ENCODE measurements at regions of chr17 and their contacts with region 1.

Region 1: DNA sequence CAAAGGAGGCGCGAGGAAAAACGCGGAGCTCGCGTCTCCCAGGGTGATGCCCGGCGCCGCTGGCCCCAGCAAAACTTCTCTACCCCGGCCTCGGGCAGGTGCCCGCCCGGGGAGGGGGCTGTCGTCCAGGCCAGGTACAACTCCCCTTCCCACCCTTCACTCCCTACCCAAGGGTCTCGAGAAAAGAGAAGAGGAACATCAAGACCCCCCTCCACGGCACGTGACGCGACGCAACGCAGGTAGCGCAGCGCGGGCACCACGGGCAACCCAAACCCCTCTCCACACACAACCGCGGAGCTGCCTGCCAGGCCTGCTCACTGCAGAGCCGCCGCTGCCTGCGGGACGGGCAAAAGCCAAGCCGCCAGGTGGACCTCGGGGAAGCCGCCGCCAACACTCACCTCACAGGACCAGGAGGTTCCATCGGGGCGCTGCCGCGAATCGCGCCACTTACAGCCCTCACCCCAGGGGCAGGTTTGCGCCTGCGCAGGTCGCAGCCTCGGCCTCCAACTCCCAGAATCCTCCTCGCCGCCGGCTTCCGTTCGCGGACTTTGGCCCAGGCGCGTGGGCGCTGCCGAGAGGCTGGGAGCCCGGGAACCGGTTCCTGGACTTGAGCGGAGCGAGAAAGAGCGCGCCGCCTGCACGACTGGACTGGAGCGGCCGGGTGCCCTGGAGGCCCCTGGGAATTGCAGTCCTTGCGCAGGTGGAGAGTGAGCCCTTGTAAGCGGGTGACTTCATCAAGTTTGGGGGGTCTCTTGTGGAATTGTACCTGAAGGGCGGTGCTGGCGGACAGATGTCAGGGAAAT is at the start of gene ZNF232:
- DNase-seq: peak; percentile 94
- ATAC-seq: peak; percentile 91
- H3K4me3 ChIP-seq: peak within 1 kb of the TSS; percentile 80 to 93 (median 88)
- H3K4me3 Mint-ChIP-seq: peak within 1 kb of the TSS; percentile 86
- H3K27ac ChIP-seq: peak within 1 kb of the TSS; percentile 62 to 74
- H3K27ac Mint-ChIP-seq: peak within 1 kb of the TSS; percentile 70
- H3K4me1 ChIP-seq: peaks cover 15 to 20% of the 10 kb centered on the region in 2 donors
- H3K4me1 Mint-ChIP-seq: peaks cover 25% of the 10 kb centered on the region
- H3K27me3 ChIP-seq: peaks cover 0 to 16% (median 8%) of the 10 kb centered on the region in 4 experiments
- H3K27me3 Mint-ChIP-seq: peaks cover 10% of the 10 kb centered on the region
- CTCF ChIP-seq: no peak
- total RNA-seq, gene ZNF232: 17.4 and 19.3 TPM in 2 replicates

Region 2: GRCh38 chr17:4986951-4987766 is 124.4 kb before region 1 on chr17 and contains the start of gene CAMTA2:
- CTCF ChIA-PET with region 1: no interaction called
- POLR2A ChIA-PET with region 1: no interaction called
- intact Hi-C with region 1: loop called (anchors 5 kb)
- DNase-seq: peak; percentile 91
- ATAC-seq: peak; percentile 89
- H3K4me3 ChIP-seq: peak within 1 kb of the TSS; percentile 67 to 96 (median 81)
- H3K4me3 Mint-ChIP-seq: peak within 1 kb of the TSS; percentile 91
- H3K27ac ChIP-seq: peak within 1 kb of the TSS; percentile 84 to 90
- H3K27ac Mint-ChIP-seq: peak within 1 kb of the TSS; percentile 90
- H3K4me1 ChIP-seq: peaks cover 21 to 28% of the 10 kb centered on the region in 2 donors
- H3K4me1 Mint-ChIP-seq: peaks cover 35% of the 10 kb centered on the region
- H3K27me3 ChIP-seq: no peaks in the 10 kb centered on the region
- H3K27me3 Mint-ChIP-seq: no peaks in the 10 kb centered on the region
- CTCF ChIP-seq: peak; percentile 88
- total RNA-seq, gene CAMTA2: 57.6 and 57.9 TPM in 2 replicates

Region 3: DNA sequence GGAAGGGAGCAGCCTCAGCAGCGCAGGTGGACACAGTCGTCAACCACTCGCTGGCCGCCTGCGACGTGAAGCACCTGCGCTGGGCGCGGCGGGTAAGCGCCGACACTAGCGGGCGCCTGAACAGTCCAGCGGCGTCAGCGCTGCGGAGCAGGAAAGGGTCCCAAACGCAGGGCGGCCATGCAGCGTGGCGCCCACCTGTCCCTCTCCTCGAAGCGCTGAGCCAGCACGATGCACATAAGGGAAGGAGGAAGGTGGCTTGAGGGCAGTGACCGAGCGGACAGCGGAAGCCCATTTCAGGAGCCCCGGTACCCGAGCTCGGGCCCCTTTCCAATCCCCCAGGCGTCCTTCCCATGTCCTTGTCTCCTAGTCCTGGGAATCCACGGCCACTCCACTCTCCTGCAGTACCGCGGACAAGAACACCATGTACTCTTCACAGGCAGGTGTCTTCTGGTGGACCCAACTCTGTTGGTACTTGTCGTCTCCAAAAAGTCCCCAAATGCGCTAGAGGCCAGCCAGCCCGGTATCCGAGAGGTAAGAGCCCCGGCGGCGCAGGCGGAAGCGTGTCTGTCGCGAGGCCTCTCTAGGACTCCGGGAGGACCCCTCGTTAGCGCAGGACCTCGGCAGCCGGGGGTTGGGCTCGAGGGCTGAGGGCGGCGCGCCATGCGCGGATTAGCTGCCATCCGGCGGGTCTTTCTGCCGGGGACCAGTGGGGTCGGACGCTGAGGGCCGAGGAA is 14.3 kb before region 1 on chr17:
- CTCF ChIA-PET with region 1: interaction called, 3 read pairs
- POLR2A ChIA-PET with region 1: no interaction called
- intact Hi-C with region 1: loop called (anchors 1 kb)
- DNase-seq: peak; percentile 81
- ATAC-seq: peak; percentile 93
- H3K4me3 ChIP-seq: peak overlapping the region; percentile 17 to 79 (median 71)
- H3K4me3 Mint-ChIP-seq: peak overlapping the region; percentile 97
- H3K27ac ChIP-seq: peak overlapping the region; percentile 33 to 76
- H3K27ac Mint-ChIP-seq: peak overlapping the region; percentile 90
- H3K4me1 ChIP-seq: peaks cover 4 to 14% of the 10 kb centered on the region in 2 donors
- H3K4me1 Mint-ChIP-seq: peaks cover 12% of the 10 kb centered on the region
- H3K27me3 ChIP-seq: peaks cover 0 to 3% (median 0%) of the 10 kb centered on the region in 4 experiments
- H3K27me3 Mint-ChIP-seq: no peaks in the 10 kb centered on the region
- CTCF ChIP-seq: no peak

Region 4: DNA sequence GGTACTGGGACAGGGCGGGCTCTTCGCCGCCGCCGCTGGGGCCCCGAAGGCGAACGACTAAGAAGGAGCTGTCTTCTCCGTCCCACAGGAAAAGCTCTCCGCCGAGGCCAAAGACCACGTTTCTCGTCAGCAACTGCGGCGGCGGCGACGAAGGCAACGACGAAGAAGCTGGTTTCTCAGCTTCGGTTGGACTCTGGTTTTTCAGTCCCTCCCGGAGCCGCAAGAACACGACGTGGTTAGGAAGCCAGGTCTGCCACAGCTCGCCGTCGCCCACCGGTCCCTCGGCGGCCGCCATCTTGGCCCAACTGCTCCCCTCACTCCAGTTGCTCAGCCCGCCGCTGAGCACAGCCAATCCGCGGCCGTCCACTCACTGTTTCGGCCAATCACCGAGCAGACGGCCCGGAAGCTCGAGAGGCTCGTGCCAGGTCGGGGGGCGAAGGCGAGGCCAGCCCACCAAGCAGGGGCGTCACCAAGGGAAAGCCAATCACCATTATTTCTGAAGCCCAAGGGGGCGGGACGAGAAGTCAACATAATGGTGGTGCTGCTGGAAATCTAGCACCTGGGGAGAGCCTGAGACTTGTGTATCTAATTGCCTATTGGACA is 307.9 kb after region 1 on chr17 and contains the start of gene NUP88:
- CTCF ChIA-PET with region 1: no interaction called
- POLR2A ChIA-PET with region 1: no interaction called
- intact Hi-C with region 1: loop called (anchors 10 kb)
- DNase-seq: peak; percentile 98
- ATAC-seq: peak; percentile 83
- H3K4me3 ChIP-seq: peak within 1 kb of the TSS; percentile 93 to 100 (median 99)
- H3K4me3 Mint-ChIP-seq: peak within 1 kb of the TSS; percentile 94
- H3K27ac ChIP-seq: peak within 1 kb of the TSS; percentile 98 to 100
- H3K27ac Mint-ChIP-seq: peak within 1 kb of the TSS; percentile 99
- H3K4me1 ChIP-seq: peaks cover 25 to 35% of the 10 kb centered on the region in 2 donors
- H3K4me1 Mint-ChIP-seq: peaks cover 49% of the 10 kb centered on the region
- H3K27me3 ChIP-seq: no peaks in the 10 kb centered on the region
- H3K27me3 Mint-ChIP-seq: no peaks in the 10 kb centered on the region
- CTCF ChIP-seq: no peak
- total RNA-seq, gene NUP88: 221 and 238 TPM in 2 replicates